ENCODE measurements at regions of chr6 and their contacts with region 1.

Region 1: GRCh38 chr6:36615018-36615761 is 21.0 kb downstream of the SRSF3 start:
- DNase-seq: peak; percentile 63
- CTCF ChIP-seq: peak; percentile 54

Region 2: DNA sequence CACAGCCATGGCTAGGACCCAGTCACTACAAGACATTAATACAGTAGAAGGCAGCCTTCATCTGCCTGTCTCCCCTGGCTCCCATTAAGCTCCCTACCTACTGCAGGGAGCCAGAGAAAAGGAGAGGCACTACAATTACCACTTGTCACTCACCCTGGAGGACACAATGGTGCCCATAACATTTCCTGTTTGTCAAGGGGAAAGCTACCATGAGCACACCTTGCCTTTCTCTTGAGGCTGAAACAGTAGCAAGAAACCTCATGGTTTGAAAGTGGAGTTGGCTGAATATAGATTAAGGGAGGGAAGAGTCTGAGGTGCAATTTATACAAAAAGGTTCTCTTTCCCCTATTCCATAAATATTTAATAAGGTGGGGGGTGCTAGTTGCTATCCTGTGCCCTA is 95.8 kb before region 1 on chr6:
- CTCF ChIA-PET with region 1: no interaction called
- POLR2A ChIA-PET with region 1: no interaction called
- DNase-seq: no peak
- CTCF ChIP-seq: no peak

Region 3: DNA sequence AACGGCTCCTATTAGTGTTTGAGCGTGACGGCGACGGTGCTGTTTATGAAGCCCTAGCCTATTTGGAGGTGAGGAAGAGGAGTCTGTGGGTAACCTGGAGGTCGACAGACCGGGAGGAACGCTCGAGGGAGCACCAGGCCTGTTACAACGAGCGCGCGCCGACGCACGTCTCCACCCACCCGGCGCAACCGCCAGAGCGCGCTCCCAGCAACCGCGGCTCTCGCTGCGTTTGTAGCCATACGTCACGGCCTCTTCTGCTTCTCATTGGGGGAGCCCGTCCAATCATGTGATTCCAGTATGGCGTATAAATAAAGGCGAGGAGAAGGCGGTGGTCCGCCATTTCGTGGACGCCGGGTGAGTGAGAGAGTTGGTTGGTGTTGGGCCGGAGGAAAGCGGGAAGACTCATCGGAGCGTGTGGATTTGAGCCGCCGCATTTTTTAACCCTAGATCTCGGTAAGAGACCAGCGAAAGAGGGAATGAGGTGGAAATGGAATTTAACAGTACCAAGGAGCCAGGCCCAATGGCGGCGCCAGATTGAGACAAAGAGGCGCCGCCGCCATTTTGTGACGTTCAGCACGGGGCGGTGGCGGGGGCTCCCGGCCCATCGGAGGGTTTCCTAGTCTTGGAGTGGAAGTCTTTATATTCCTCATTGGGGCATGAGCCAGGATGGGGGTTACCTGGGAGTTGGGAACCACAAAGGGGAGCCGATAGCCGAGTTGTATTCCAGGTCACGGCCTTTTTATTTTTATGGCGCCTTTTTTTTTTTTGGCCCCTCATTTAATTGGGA is 21.0 kb before region 1 on chr6 and contains the start of gene SRSF3:
- CTCF ChIA-PET with region 1: interaction called, 10 read pairs
- POLR2A ChIA-PET with region 1: interaction called, 108 read pairs
- DNase-seq: peak; percentile 95
- CTCF ChIP-seq: peak; percentile 43

Region 4: GRCh38 chr6:36642913-36643817 is 28.0 kb after region 1 on chr6:
- CTCF ChIA-PET with region 1: interaction called, 10 read pairs
- POLR2A ChIA-PET with region 1: no interaction called
- DNase-seq: no peak
- CTCF ChIP-seq: no peak

Region 5: DNA sequence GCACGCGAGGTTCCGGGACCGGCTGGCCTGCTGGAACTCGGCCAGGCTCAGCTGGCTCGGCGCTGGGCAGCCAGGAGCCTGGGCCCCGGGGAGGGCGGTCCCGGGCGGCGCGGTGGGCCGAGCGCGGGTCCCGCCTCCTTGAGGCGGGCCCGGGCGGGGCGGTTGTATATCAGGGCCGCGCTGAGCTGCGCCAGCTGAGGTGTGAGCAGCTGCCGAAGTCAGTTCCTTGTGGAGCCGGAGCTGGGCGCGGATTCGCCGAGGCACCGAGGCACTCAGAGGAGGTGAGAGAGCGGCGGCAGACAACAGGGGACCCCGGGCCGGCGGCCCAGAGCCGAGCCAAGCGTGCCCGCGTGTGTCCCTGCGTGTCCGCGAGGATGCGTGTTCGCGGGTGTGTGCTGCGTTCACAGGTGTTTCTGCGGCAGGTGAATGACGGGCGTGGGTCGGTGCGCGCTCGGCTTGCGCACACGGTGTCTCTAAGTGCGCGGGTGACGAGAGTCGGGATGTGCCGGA is 63.4 kb after region 1 on chr6 and contains the start of gene CDKN1A:
- CTCF ChIA-PET with region 1: interaction called, 20 read pairs
- POLR2A ChIA-PET with region 1: interaction called, 6 read pairs
- DNase-seq: peak; percentile 87
- CTCF ChIP-seq: no peak

Region 6: DNA sequence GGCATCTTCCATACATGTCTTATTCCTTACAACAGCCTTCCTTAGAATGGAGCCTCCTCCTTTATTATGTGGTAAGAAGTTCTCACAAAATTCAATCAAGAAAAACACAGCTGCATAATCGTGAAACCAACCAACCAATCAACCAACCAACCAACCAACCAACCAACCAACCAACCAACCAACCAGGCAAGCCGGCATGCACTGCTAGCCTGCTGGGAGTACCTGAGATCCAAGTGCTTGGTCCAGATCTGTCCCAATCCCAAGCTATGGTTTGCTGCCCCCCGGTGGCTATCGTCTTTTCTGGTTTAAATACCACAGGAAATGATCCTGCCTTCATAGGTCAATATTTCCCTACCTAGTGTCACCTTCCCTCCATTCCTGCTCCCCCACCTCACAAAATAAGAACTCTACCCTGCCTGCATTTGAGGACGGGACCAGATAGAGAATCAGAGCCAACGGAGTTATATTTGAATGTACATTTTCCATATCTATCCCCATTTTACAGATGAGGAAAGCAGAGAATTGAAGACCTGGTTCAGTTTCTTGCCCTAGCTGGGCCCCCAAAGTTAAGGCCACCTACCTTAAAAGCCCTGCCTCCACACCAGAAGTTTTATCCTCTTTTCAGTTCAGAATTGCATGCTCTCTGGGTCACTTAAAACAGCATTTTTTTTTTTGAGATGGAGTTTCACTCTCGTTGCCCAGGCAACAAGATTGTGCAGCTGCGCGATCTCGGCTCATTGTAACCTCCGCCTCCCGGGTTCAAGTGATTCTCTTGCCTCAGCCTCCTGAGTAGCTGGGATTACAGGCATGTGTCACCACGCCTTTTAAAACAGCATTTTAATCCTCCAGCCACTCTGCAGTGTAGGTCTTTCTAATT is 109.6 kb after region 1 on chr6:
- CTCF ChIA-PET with region 1: interaction called, 22 read pairs
- POLR2A ChIA-PET with region 1: interaction called, 4 read pairs
- DNase-seq: peak; percentile 71
- CTCF ChIP-seq: peak; percentile 58

Region 7: DNA sequence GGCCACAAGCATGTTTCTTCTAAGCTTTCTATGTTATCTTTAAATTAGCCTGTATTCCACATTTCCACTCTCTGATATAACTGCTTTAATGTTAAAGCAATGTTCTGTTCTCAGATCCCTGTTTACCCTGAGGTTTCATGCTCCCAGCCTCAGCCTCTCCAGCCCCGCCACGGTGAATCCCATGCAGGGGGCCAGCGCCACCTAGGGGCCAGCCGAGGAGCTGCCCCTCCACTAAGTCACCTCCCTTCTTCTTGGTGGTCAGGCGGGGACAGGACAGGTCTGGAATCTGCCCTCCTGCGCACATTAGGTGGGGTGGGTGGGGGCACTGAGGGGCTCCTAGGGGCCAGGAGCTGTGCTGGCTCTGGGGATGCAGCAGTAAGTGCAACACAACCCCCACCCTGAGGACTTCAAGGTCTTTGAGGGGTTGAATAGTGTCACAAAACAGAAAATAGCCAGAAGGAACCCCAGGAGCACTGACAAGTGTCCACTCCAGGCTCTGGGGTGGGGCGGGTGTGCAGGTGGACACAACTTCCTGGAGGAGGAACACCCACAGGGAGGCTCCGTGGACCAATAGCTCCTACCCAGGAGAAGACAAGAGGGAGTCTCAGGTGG is 144.1 kb after region 1 on chr6:
- CTCF ChIA-PET with region 1: interaction called, 86 read pairs
- POLR2A ChIA-PET with region 1: no interaction called
- DNase-seq: peak; percentile 89
- CTCF ChIP-seq: peak; percentile 97

Region 8: DNA sequence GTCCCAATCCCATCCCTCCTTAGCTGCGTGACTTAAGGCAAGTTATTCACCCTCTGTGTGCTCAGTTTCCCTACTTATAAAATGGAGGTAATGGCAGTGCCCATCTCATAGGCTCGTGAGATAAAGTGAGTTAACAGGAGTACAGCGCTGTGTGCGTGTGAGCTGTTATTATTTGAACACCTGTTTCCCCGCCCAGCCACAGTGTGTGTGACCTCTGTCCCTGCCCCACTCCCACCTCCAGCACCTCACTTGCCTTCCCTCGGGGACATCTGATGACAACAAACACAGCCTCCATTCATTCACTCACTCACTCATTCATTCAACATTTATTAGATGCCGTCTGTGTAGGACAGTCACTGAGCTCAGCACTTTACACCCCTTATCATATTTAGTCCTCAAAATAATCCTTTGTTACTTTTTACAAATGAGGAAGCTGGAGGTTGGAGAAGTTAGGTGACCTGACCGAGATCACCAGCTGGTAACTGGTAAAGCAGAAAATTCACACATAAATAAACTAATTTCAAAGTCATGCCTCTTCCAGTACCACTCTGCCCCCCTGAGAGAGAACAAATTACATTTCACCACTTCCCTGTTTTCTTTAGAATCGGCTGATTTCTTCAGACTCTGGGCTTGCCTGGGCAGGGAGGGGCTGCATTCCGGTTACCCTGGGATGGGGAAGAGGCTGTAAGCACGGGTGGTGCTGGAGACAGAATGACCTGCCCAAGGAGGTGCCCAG is 165.4 kb after region 1 on chr6:
- CTCF ChIA-PET with region 1: interaction called, 20 read pairs
- POLR2A ChIA-PET with region 1: interaction called, 5 read pairs
- DNase-seq: no peak
- CTCF ChIP-seq: no peak

Measured in GM10248 (cell line).